Vagina (tissue), 2 donors: ENCODE measurements at regions of chr4 and their contacts with region 1.

Region 1: DNA sequence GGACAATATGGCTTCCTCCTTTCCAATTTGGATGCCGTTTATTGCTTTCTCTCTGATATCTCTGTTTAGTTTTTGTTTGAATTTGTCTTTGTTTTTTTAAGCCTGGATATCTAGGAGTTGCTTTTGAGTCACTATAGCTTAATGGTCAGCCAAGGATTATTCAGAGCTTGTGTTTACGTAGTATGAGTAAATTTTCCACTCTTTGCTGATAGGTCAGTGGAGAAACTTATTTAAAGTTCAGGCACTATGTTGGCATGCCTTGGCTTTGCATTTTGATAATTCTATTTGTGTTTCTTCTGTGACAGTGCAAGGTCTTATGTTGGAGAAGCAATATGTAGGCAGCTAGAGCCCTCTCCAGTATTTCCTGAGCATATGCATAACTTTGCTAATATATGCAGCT is 315.2 kb downstream of the GRID2 start:
- DNase-seq: no peak
- H3K4me3 ChIP-seq: no peak overlapping the region
- H3K27ac ChIP-seq: no peak overlapping the region
- H3K4me1 ChIP-seq: no peaks in the 10 kb centered on the region
- H3K27me3 ChIP-seq: no peaks in the 10 kb centered on the region
- CTCF ChIP-seq: no peak
- POLR2A ChIP-seq: no peak

Region 2: GRCh38 chr4:92760433-92760832 is 141.5 kb after region 1 on chr4:
- intact Hi-C with region 1: loop called (anchors 5 kb)
- DNase-seq: no peak
- H3K4me3 ChIP-seq: no peak overlapping the region
- H3K27ac ChIP-seq: no peak overlapping the region
- H3K4me1 ChIP-seq: no peaks in the 10 kb centered on the region
- H3K27me3 ChIP-seq: no peaks in the 10 kb centered on the region
- CTCF ChIP-seq: no peak
- POLR2A ChIP-seq: no peak

Region 3: GRCh38 chr4:92875041-92875440 is 256.1 kb after region 1 on chr4:
- intact Hi-C with region 1: no loop called
- DNase-seq: no peak
- H3K4me3 ChIP-seq: no peak overlapping the region
- H3K27ac ChIP-seq: no peak overlapping the region
- H3K4me1 ChIP-seq: no peaks in the 10 kb centered on the region
- H3K27me3 ChIP-seq: no peaks in the 10 kb centered on the region
- CTCF ChIP-seq: no peak
- POLR2A ChIP-seq: no peak